A673 (cell line): ENCODE measurements at regions of chr5 and their contacts with region 1.

Region 1: GRCh38 chr5:17282283-17283120 is 65.1 kb downstream of the BASP1 start:
- DNase-seq: peak; percentile 98
- H3K4me3 ChIP-seq: peak overlapping the region; percentile 30
- H3K27ac ChIP-seq: peak overlapping the region; percentile 97
- H3K4me1 ChIP-seq: peaks cover 68% of the 10 kb centered on the region
- H3K27me3 ChIP-seq: no peaks in the 10 kb centered on the region
- CTCF ChIP-seq: no peak

Region 2: DNA sequence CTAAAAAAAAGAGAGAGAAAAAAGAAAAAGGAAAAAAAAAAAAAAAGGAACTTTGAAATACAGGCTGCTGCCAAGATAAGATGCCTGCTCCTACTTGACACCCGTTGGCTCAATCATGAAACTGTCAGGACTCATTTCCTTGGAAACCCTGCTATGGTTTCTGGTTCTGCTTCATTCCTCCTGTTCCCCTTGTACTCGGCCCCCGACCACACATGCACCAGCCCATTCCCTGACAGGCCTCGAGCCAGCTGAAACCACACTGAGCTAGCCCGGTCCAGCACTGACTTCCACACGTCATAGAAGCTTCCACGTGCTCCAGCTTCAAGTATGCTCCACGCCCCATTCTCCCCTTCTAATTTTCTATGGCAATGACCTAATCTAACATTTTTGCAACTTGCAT is 439.6 kb before region 1 on chr5:
- CTCF ChIA-PET with region 1: no interaction called
- POLR2A ChIA-PET with region 1: no interaction called
- intact Hi-C with region 1: no loop called
- DNase-seq: no peak
- H3K4me3 ChIP-seq: no peak overlapping the region
- H3K27ac ChIP-seq: peak overlapping the region; percentile 16
- H3K4me1 ChIP-seq: peaks cover 53% of the 10 kb centered on the region
- H3K27me3 ChIP-seq: no peaks in the 10 kb centered on the region
- CTCF ChIP-seq: no peak

Region 3: GRCh38 chr5:17340816-17341215 is 58.3 kb after region 1 on chr5:
- CTCF ChIA-PET with region 1: no interaction called
- POLR2A ChIA-PET with region 1: no interaction called
- intact Hi-C with region 1: no loop called
- DNase-seq: peak; percentile 64
- H3K4me3 ChIP-seq: no peak overlapping the region
- H3K27ac ChIP-seq: no peak overlapping the region
- H3K4me1 ChIP-seq: peaks cover 11% of the 10 kb centered on the region
- H3K27me3 ChIP-seq: no peaks in the 10 kb centered on the region
- CTCF ChIP-seq: no peak

Region 4: GRCh38 chr5:17436761-17437221 is 154.3 kb after region 1 on chr5:
- CTCF ChIA-PET with region 1: no interaction called
- POLR2A ChIA-PET with region 1: no interaction called
- intact Hi-C with region 1: loop called (anchors 2 kb)
- DNase-seq: peak; percentile 94
- H3K4me3 ChIP-seq: peak overlapping the region; percentile 8
- H3K27ac ChIP-seq: peak overlapping the region; percentile 82
- H3K4me1 ChIP-seq: peaks cover 55% of the 10 kb centered on the region
- H3K27me3 ChIP-seq: no peaks in the 10 kb centered on the region
- CTCF ChIP-seq: no peak

Region 5: GRCh38 chr5:17852740-17853139 is 570.2 kb after region 1 on chr5:
- CTCF ChIA-PET with region 1: no interaction called
- POLR2A ChIA-PET with region 1: no interaction called
- intact Hi-C with region 1: loop called (anchors 2 kb)
- DNase-seq: no peak
- H3K4me3 ChIP-seq: no peak overlapping the region
- H3K27ac ChIP-seq: no peak overlapping the region
- H3K4me1 ChIP-seq: peaks cover 19% of the 10 kb centered on the region
- H3K27me3 ChIP-seq: no peaks in the 10 kb centered on the region
- CTCF ChIP-seq: no peak

Region 6: GRCh38 chr5:18113721-18114120 is 831.2 kb after region 1 on chr5:
- CTCF ChIA-PET with region 1: no interaction called
- POLR2A ChIA-PET with region 1: no interaction called
- intact Hi-C with region 1: loop called (anchors 10 kb)
- DNase-seq: peak; percentile 69
- H3K4me3 ChIP-seq: no peak overlapping the region
- H3K27ac ChIP-seq: no peak overlapping the region
- H3K4me1 ChIP-seq: peaks cover 21% of the 10 kb centered on the region
- H3K27me3 ChIP-seq: no peaks in the 10 kb centered on the region
- CTCF ChIP-seq: peak; percentile 59

Region 7: DNA sequence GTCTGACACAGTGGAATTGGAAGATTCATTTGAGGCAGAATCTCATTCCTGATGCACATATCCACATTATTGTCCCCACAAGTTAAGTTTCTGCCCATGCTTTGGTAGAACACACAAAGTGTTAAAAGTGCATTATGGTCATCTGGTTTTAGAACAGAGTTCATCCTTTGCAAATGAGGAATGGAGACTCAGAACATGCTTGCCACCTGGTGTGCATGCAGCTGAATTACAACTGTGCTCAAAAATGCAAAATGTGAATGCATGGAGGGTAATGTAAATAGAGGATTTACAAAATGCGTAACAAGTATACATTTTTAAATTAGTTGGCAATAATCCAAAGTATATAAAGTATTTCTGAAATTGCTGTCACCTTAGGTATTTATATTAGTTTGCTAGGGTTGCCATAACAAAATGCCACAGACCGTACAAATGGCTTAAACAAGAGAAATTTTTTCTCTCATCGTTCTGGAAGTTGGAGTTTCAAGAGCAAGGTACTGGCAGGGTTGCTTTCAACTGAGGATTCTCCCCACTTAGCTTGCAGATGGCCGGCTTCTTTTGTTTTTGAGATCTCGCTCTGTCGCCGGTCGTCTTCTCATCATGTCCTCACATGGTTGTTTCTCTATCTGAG is 1022.9 kb after region 1 on chr5:
- CTCF ChIA-PET with region 1: no interaction called
- POLR2A ChIA-PET with region 1: no interaction called
- intact Hi-C with region 1: loop called (anchors 5 kb)
- DNase-seq: peak; percentile 65
- H3K4me3 ChIP-seq: no peak overlapping the region
- H3K27ac ChIP-seq: no peak overlapping the region
- H3K4me1 ChIP-seq: peaks cover 7% of the 10 kb centered on the region
- H3K27me3 ChIP-seq: no peaks in the 10 kb centered on the region
- CTCF ChIP-seq: peak; percentile 86